Activated B cell treated with CpG ODN at 0.5 μM for 24 hours (primary cell): ENCODE measurements at regions of chr7 and their contacts with region 1.

Region 1: DNA sequence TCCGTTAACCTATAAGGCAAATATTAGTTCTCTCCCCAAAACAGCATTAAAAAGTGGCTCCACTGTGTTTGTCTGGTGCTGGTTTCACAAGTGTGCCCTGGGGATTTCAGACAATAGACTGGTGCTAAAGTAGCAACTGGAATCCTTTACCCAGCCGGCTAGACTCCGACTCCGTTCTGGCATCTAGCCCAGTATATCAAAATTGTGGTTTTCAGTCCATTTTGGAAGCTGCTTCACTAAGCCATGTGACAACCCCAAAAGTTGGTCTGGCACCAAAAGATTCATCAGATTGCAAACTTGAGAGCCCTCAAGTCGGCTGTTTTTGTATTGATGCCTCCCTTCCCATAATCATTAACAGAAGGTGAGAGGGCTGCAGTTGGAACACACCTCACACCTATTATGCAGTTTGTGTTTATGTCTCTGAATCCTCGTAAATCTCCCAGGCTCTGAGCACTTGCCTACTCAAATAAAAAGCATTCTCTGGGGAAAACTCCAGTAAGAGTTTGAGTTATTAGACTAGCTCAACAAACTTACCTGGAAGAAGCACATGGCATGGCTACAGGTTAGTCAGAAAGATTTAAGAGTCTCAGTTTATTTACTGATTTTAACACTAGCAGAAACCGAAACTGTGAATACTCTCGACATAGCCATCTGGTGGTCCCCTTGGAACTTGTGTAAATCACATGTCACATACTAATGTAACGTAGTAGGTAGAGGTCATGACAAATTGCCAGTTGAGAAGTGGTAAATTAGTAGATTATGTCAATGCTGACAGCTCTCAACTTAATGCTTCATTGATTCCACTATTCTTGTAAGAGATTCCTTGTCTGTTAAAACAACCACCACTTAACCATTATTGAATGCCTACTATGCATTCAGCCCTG is 14.8 kb upstream of the WNT16 start:
- DNase-seq: no peak
- ATAC-seq: peak; percentile 77
- H3K4me3 Mint-ChIP-seq: peak overlapping the region; percentile 44
- H3K27ac Mint-ChIP-seq: peak overlapping the region; percentile 84
- H3K4me1 Mint-ChIP-seq: peaks cover 44% of the 10 kb centered on the region
- H3K27me3 Mint-ChIP-seq: no peaks in the 10 kb centered on the region
- CTCF ChIP-seq: no peak

Region 2: GRCh38 chr7:121286742-121287734 is 27.0 kb before region 1 on chr7:
- CTCF ChIA-PET with region 1: no interaction called
- POLR2A ChIA-PET with region 1: no interaction called
- intact Hi-C with region 1: loop called (anchors 2 kb)
- DNase-seq: no peak
- ATAC-seq: peak; percentile 87
- H3K4me3 Mint-ChIP-seq: peak overlapping the region; percentile 41
- H3K27ac Mint-ChIP-seq: peak overlapping the region; percentile 89
- H3K4me1 Mint-ChIP-seq: peaks cover 27% of the 10 kb centered on the region
- H3K27me3 Mint-ChIP-seq: no peaks in the 10 kb centered on the region
- CTCF ChIP-seq: no peak

Region 3: GRCh38 chr7:121302214-121302745 is 11.8 kb before region 1 on chr7:
- CTCF ChIA-PET with region 1: no interaction called
- POLR2A ChIA-PET with region 1: interaction called, 4 read pairs
- intact Hi-C with region 1: loop called (anchors 1 kb)
- DNase-seq: no peak
- ATAC-seq: peak; percentile 97
- H3K4me3 Mint-ChIP-seq: peak overlapping the region; percentile 5
- H3K27ac Mint-ChIP-seq: peak overlapping the region; percentile 81
- H3K4me1 Mint-ChIP-seq: peaks cover 56% of the 10 kb centered on the region
- H3K27me3 Mint-ChIP-seq: no peaks in the 10 kb centered on the region
- CTCF ChIP-seq: no peak

Region 4: DNA sequence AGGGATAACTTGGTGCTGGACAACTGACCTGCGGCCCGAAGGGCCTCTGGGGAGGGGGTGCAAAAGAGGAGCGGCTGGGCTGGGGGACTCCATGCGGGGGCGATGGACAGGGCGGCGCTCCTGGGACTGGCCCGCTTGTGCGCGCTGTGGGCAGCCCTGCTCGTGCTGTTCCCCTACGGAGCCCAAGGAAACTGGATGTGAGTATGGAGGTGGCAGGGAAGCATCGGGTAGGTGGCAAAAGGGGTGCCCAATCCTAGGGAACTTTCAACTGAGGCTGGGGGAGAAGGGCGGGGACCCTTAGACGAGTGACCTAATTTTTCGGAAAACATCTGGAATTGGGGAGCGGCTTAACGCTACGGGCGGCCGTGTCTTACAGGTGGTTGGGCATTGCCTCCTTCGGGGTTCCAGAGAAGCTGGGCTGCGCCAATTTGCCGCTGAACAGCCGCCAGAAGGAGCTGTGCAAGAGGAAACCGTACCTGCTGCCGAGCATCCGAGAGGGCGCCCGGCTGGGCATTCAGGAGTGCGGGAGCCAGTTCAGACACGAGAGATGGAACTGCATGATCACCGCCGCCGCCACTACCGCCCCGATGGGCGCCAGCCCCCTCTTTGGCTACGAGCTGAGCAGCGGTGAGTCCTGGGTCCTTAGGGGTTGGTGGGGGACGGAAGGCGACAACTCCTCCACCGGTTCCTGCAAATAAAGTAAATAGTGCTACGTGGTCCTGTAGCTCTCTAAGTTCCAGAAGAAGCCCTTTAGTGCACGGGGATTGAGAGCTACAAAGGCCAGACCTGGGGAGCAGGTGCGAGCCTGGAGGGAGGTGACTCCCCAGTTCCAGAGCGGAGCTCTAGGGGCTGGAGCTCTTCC is 15.4 kb after region 1 on chr7:
- CTCF ChIA-PET with region 1: interaction called, 3 read pairs
- POLR2A ChIA-PET with region 1: interaction called, 14 read pairs
- intact Hi-C with region 1: loop called (anchors 1 kb)
- DNase-seq: peak; percentile 43
- ATAC-seq: peak; percentile 49
- H3K4me3 Mint-ChIP-seq: peak overlapping the region; percentile 91
- H3K27ac Mint-ChIP-seq: peak overlapping the region; percentile 85
- H3K4me1 Mint-ChIP-seq: peaks cover 36% of the 10 kb centered on the region
- H3K27me3 Mint-ChIP-seq: peaks cover 11% of the 10 kb centered on the region
- CTCF ChIP-seq: no peak

Region 5: GRCh38 chr7:121433780-121434179 is 119.7 kb after region 1 on chr7:
- CTCF ChIA-PET with region 1: no interaction called
- POLR2A ChIA-PET with region 1: no interaction called
- intact Hi-C with region 1: no loop called
- DNase-seq: no peak
- ATAC-seq: no peak
- H3K4me3 Mint-ChIP-seq: no peak overlapping the region
- H3K27ac Mint-ChIP-seq: no peak overlapping the region
- H3K4me1 Mint-ChIP-seq: peaks cover 31% of the 10 kb centered on the region
- H3K27me3 Mint-ChIP-seq: no peaks in the 10 kb centered on the region
- CTCF ChIP-seq: no peak